Heart right ventricle (tissue), 16 donors: ENCODE measurements at regions of chr4 and their contacts with region 1.

Region 1: GRCh38 chr4:77758804-77759203 is 60.4 kb downstream of the CNOT6L start:
- DNase-seq: no peak
- ATAC-seq: no peak
- H3K4me3 ChIP-seq: no peak overlapping the region
- H3K27ac ChIP-seq: no peak overlapping the region
- H3K4me1 ChIP-seq: no peaks in the 10 kb centered on the region
- H3K27me3 ChIP-seq: no peaks in the 10 kb centered on the region
- CTCF ChIP-seq: no peak

Region 2: DNA sequence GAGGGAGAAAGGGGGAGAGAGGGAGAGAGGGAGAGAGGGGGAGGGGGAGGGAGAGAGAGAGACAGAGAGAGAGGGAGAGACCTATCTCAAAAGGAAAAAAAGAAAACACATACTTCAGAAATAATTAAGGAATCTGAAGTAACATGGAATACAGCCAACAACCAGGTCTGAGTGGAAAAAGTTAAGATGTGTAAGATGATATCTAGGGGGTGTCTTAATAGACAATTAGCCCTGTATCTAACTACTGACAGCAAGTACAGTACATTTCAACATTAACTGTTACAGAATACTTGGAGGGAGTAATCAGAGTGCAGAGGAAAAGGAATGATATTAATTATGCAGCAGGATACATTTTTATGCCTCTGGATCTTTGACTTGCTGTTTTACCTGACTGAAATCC is 1633.0 kb before region 1 on chr4:
- intact Hi-C with region 1: loop called in 1 of 10 experiments (anchors 5 kb)
- DNase-seq: no peak
- ATAC-seq: no peak
- H3K4me3 ChIP-seq: no peak overlapping the region
- H3K27ac ChIP-seq: no peak overlapping the region
- H3K4me1 ChIP-seq: no peaks in the 10 kb centered on the region
- H3K27me3 ChIP-seq: no peaks in the 10 kb centered on the region
- CTCF ChIP-seq: no peak

Region 3: GRCh38 chr4:77899607-77900006 is 140.8 kb after region 1 on chr4:
- intact Hi-C with region 1: no loop called
- DNase-seq: no peak
- ATAC-seq: no peak
- H3K4me3 ChIP-seq: no peak overlapping the region
- H3K27ac ChIP-seq: no peak overlapping the region
- H3K4me1 ChIP-seq: peaks cover 0 to 4% (median 0%) of the 10 kb centered on the region in 9 donors
- H3K27me3 ChIP-seq: no peaks in the 10 kb centered on the region
- CTCF ChIP-seq: no peak

Region 4: DNA sequence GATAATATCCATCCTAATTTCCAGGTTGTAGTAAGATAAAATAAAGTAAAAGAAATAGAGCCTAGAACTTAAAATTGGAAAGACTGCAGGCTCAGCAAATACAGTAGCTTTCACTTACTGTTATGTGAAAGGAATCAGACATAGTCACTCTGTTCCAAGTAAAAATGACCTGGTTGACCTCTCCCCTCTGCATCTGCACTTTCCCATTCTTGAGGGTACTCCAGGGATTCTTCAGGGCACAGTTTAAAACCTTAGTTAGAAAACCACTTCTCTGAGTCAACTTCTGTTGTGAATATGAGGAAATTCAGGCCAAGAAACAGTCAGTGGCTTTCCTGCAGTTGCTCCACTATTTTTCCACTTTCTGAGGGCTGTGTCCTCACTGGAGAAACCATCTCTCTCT is 341.3 kb after region 1 on chr4:
- intact Hi-C with region 1: no loop called
- DNase-seq: peak in 1 of 2 donors; percentile 10
- ATAC-seq: peak in 4 of 8 donors; percentile 60 to 78 (median 68)
- H3K4me3 ChIP-seq: no peak overlapping the region
- H3K27ac ChIP-seq: peak overlapping the region in 3 of 10 donors; percentile 37 to 48 (median 44)
- H3K4me1 ChIP-seq: peaks cover 0 to 25% (median 12%) of the 10 kb centered on the region in 9 donors
- H3K27me3 ChIP-seq: no peaks in the 10 kb centered on the region
- CTCF ChIP-seq: no peak